ENCODE measurements at regions of chr6 and their contacts with region 1.

Region 1: GRCh38 chr6:14144678-14145113 is 27.1 kb downstream of the CD83 start:
- DNase-seq: peak; percentile 40
- ATAC-seq: peak; percentile 92
- H3K4me3 ChIP-seq: no peak overlapping the region
- H3K27ac ChIP-seq: no peak overlapping the region
- H3K4me1 ChIP-seq: peaks cover 7% of the 10 kb centered on the region; the same call in 1 of the 2 replicates
- H3K27me3 ChIP-seq: no peaks in the 10 kb centered on the region
- CTCF ChIP-seq: peak; percentile 89 to 96 (median 94)
- EP300 ChIP-seq: no peak
- POLR2A ChIP-seq: no peak
- RAD21 ChIP-seq: peak; percentile 90

Region 2: DNA sequence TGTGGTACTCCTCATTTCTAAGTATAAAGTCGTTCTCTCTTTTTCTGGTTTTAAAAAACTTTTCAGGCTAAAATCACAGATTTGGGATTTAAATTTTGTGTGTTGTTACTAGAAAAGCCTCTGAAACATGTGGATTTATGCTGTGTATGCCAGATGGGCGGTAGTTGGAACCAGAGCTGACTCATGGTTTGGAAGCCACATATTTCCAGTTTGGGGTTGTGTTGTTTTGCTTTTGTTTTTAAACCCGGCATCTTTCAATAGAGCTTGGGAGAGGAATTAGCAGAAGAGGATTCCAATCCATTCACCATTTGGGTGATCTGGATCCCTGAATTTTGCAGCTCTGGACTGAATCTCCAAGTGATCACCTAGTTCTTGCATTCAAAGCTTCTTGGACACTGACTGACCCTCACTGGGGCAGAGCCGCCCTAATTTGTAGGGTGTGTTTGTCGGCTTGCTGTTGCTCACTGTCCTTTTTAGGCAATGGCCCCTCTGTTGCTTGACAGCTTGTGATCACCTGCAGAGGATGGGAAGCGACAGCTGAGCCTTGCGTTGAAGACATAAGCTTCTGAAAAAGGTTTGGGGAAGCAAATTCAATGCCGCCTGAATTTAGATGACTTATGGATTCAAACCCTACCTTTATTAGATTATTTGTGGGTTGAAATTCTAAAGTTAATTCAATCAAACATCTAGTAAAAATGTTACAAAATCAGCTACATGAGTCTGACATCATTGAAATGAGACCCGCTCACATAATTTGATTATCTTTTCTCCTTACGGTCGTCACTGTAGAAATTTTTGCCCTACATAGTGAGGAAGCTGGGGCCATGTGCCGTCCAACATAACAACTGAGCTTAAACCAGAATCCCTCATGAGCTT is 107.1 kb before region 1 on chr6:
- CTCF ChIA-PET with region 1: interaction called, 10 read pairs
- POLR2A ChIA-PET with region 1: no interaction called
- RAD21 ChIA-PET with region 1: interaction called, 3 read pairs
- SMC1A ChIA-PET with region 1: interaction called, 6 read pairs
- in situ Hi-C with region 1: no loop called
- intact Hi-C with region 1: no loop called
- DNase-seq: no peak
- ATAC-seq: peak; percentile 16; the same call in 1 of the 3 replicates
- H3K4me3 ChIP-seq: no peak overlapping the region
- H3K27ac ChIP-seq: no peak overlapping the region
- H3K4me1 ChIP-seq: peaks cover 14% of the 10 kb centered on the region
- H3K27me3 ChIP-seq: no peaks in the 10 kb centered on the region; a peak in 1 of 4 replicates
- CTCF ChIP-seq: no peak
- EP300 ChIP-seq: no peak
- POLR2A ChIP-seq: no peak
- RAD21 ChIP-seq: no peak

Region 3: DNA sequence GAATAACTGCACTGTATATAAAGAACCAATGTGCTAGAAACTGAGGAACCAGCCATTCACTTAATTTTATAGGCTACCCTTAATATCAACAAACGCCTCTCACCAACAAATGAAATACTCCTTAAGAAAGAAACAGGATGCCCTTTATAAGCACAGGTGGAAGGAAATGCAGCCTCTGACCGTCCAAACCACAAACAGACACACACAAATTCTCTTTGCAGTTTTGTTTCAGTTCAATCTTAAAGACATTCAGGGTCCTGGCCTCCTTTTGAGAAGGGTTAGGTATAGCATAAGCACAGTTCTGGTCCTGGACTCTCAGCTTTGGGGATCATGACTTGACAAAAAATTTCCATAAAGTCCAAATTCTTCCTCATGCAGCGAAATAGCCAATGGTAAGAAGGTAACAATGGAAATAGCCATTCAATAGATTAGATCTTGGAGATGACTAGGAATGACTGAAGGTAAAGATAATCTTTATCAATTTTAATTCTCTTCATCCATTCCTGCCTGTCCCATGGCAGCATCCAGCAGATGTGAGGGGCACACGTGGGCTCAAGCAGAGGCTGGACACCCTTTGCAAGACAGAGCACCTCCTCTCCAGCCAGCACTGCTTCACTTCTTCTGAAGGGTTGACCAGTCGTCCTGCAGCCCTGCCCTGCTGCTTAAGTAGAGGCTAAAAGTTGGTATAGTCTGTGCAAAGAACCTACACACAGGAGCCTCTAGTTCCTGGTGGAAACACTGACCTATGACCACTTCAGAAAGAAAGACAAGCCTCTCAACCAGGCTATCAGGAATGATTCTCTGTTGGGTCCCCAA is 96.8 kb after region 1 on chr6:
- CTCF ChIA-PET with region 1: no interaction called
- POLR2A ChIA-PET with region 1: no interaction called
- RAD21 ChIA-PET with region 1: no interaction called
- SMC1A ChIA-PET with region 1: no interaction called
- in situ Hi-C with region 1: no loop called
- intact Hi-C with region 1: no loop called
- DNase-seq: peak; percentile 11
- ATAC-seq: peak; percentile 36; the same call in 1 of the 3 replicates
- H3K4me3 ChIP-seq: no peak overlapping the region
- H3K27ac ChIP-seq: no peak overlapping the region
- H3K4me1 ChIP-seq: peaks cover 10% of the 10 kb centered on the region
- H3K27me3 ChIP-seq: no peaks in the 10 kb centered on the region
- CTCF ChIP-seq: no peak
- EP300 ChIP-seq: 0 out of 4 replicates have a peak, but pooled peaks of 1 of the 2 experiments have one; percentile 21
- POLR2A ChIP-seq: no peak
- RAD21 ChIP-seq: no peak

Measured in GM12878 (cell line).